HepG2 (cell line): ENCODE measurements at regions of chr7 and their contacts with region 1.

Region 1: DNA sequence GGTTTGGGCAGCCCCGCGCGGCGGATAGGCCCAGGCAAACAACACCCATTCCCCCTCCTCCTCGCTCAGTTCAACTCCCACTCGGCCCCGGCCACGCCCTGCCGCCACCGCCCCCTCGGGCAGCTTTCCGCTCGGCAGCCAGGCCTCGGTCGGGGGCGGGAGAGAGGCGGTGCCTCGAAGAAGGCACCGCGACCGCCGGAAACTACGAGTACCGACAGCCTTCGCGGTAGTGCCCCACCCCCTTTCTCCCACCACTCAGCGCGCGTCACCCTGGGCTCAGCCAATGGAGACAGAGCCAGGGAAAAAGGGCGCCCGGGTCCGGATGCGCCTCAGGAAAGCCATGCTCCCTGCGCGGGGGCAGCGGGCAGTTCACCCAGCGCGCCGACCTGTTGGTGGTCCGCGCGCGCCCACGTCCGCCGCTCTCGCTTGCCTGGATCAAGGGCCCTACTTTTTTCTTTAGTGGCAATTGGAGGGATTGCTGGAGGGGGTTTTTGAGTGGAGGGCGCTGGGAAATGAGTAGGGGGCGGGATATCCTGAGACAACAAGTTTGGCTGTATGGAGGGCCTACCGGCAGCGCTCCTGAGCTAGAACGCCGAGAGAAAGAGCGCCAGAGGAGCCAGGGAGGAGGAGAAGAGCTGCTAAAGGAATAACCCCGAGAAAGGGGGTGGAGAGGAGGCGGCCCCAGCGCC is 557 bp upstream of the SP4 start:
- DNase-seq: peak; percentile 94
- ATAC-seq: peak; percentile 93
- H3K4me3 ChIP-seq: peak overlapping the region; percentile 70 to 82 (median 75)
- H3K27ac ChIP-seq: peak overlapping the region; percentile 95
- H3K4me1 ChIP-seq: peaks cover 39% of the 10 kb centered on the region
- H3K27me3 ChIP-seq: no peaks in the 10 kb centered on the region
- CTCF ChIP-seq: peak; percentile 13; the same call in 1 of the 2 replicates
- EP300 ChIP-seq: 0 out of 4 replicates have a peak, but pooled peaks of 1 of the 2 experiments have one; percentile 26
- POLR2A ChIP-seq: peak; percentile 59 to 67; a peak in 3 of 4 replicates
- RAD21 ChIP-seq: no peak

Region 2: GRCh38 chr7:20786779-20787659 is 640.3 kb before region 1 on chr7 and contains the start of gene SP8:
- CTCF ChIA-PET with region 1: no interaction called
- POLR2A ChIA-PET with region 1: no interaction called
- in situ Hi-C with region 1: no loop called
- intact Hi-C with region 1: loop called (anchors 10 kb)
- DNase-seq: peak; percentile 31
- ATAC-seq: peak; percentile 58
- H3K4me3 ChIP-seq: peak within 1 kb of the TSS; percentile 47 to 68 (median 55); a peak in 5 of 6 replicates
- H3K27ac ChIP-seq: no peak within 1 kb of the TSS
- H3K4me1 ChIP-seq: peaks cover 21% of the 10 kb centered on the region
- H3K27me3 ChIP-seq: peaks cover 3 to 62% of the 10 kb centered on the region in 2 experiments
- CTCF ChIP-seq: no peak
- EP300 ChIP-seq: no peak
- POLR2A ChIP-seq: no peak
- RAD21 ChIP-seq: no peak
- total RNA-seq, gene SP8: not detected in 2 replicates

Region 3: DNA sequence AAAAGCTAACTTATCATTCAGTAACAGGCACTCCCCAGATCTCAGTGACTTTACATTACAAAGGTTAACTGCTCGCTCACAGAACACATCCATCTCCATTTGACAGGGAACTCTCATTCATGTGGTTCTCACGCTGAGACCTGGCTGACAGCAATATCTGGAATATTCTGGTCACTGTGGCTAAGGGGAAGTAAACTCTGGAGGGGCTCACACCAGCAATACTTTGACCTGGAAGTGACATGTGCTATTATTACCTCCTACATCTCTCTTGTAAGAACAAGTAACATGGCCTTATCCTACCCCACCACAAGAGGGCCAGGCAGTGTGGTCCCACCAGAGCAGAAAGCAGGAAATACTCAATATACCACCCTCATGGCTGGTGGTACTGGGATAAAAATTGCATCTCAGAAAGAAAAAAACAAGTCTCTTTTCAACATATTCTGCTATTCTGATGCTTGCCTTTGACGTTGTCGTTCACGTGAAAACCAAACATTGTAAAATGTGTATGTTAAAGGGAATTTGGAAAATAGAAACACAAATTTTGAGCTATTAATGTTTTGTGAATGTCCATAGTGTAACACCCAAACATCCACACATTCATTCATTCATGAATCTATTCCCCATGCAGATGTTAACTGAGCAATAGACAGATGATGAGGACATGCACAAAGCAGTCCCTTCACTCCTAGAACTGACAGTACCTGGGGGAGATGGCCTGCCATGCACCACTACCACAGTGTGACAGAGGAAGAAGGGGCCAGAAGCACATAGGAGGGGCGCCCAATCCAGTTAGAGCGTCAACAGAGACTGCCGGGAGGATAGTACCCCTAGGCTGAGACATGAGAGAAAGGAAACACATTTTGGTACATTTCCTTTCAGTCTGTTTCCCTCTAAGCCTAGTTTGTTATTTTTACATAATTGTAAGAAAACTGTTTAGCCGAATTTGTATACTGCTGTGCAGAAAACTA is 165.4 kb before region 1 on chr7:
- CTCF ChIA-PET with region 1: no interaction called
- POLR2A ChIA-PET with region 1: no interaction called
- in situ Hi-C with region 1: no loop called
- intact Hi-C with region 1: loop called (anchors 1 kb)
- DNase-seq: peak; percentile 32
- ATAC-seq: peak; percentile 96
- H3K4me3 ChIP-seq: no peak overlapping the region
- H3K27ac ChIP-seq: no peak overlapping the region
- H3K4me1 ChIP-seq: no peaks in the 10 kb centered on the region
- H3K27me3 ChIP-seq: no peaks in the 10 kb centered on the region
- CTCF ChIP-seq: peak; percentile 64
- EP300 ChIP-seq: no peak
- POLR2A ChIP-seq: no peak
- RAD21 ChIP-seq: peak; percentile 43; the same call in 1 of the 2 replicates

Region 4: DNA sequence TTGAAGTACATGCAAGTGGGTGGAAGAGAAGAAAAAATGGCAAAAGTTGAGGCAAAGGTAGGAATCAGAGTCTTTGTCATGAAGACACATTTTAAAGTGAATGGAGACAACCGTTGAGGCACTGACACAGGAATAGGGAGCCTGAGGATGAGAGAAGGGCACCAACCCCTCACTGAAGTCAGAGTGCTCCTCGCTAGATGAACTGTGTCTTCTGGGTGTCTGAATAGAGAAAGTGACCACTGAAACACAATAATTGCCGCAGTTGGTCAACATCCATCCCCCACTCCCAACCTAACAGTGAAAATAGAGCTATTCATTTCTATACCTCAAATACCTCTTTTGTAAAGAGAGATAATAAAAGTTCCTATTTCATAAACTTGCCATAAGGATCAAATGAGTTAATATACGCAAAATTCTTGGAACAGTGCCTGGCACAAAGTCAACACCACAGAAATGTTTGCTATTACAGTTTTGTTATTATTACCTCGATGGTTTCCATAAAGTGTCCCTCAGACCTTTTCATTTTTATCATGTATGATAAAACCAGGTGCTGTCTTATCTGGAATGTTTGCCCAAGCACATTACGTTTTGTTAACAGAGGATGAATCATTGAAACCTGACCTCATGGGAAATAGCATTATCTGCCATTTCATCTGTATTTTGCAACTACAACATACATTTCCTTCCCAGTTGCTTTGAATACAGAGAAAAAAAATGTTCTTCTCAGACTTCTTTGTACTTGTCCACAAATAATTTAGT is 61.3 kb before region 1 on chr7:
- CTCF ChIA-PET with region 1: no interaction called
- POLR2A ChIA-PET with region 1: interaction called, 3 read pairs
- in situ Hi-C with region 1: no loop called
- intact Hi-C with region 1: loop called (anchors 5 kb)
- DNase-seq: peak; percentile 77
- ATAC-seq: no peak; the same call in 2 of the 3 replicates
- H3K4me3 ChIP-seq: no peak overlapping the region
- H3K27ac ChIP-seq: no peak overlapping the region
- H3K4me1 ChIP-seq: peaks cover 14% of the 10 kb centered on the region; the same call in 1 of the 2 replicates
- H3K27me3 ChIP-seq: no peaks in the 10 kb centered on the region
- CTCF ChIP-seq: no peak
- EP300 ChIP-seq: peak in 1 of 2 experiments; percentile 38; a peak in 1 of 4 replicates
- POLR2A ChIP-seq: no peak
- RAD21 ChIP-seq: no peak